ENCODE measurements at regions of chr14 and their contacts with region 1.

Region 1: DNA sequence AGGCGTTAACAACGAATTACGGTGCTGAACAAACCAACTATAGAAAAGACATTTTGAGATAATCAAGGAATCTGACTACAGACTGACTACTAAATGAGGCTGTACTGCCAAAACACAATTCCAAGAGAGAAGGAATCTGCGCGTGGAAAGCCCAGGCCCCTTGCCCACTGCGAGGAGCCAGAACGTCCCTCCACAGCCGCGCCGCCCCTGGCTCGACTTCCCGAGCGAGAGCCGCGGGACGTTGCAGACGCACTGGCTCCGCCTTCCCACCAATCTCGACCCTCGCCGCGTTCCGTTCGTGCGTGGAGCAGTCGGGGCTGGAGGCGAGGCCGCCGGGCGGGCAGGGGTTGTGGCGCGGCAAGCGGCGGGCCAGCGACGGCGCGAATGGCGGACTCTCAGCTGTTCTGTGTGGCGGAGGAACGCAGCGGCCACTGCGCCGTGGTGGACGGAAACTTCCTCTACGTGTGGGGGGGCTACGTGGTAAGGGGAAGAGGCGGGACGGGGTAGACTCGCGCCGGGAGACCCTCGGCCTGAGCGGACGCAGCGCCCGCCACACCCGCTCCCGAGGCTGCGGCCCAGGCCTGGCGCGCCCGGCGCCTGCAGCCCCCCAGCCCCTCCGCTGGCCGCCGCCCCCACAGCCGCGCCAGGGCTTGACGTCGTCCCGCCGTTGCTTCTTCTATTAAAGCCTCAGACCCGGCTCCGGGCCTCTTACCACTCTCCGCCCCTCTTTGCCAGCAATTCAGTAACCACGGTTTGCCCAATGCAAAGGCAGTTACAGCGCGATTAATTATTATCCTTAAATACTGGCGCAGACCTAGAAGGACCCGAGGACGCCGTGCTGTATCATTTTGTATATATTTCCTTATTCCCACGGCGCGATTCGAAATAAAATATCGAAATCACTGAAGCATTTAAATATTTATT is at the start of gene KLHDC1:
- DNase-seq: peak; percentile 83
- H3K4me3 ChIP-seq: peak within 1 kb of the TSS; percentile 53
- H3K27ac ChIP-seq: peak within 1 kb of the TSS; percentile 85
- H3K4me1 ChIP-seq: no peaks in the 10 kb centered on the region
- H3K27me3 ChIP-seq: no peaks in the 10 kb centered on the region
- CTCF ChIP-seq: no peak
- total RNA-seq, gene KLHDC1: 0.94 to 2.5 TPM

Region 2: GRCh38 chr14:49767562-49768300 is 74.7 kb after region 1 on chr14 and contains the start of gene KLHDC2:
- intact Hi-C with region 1: loop called (anchors 5 kb)
- DNase-seq: peak; percentile 87
- H3K4me3 ChIP-seq: peak within 1 kb of the TSS; percentile 88
- H3K27ac ChIP-seq: peak within 1 kb of the TSS; percentile 97
- H3K4me1 ChIP-seq: peaks cover 10% of the 10 kb centered on the region
- H3K27me3 ChIP-seq: no peaks in the 10 kb centered on the region
- CTCF ChIP-seq: no peak
- total RNA-seq, gene KLHDC2: 37.5 to 68.7 TPM

Measured in colonic mucosa (tissue), 4 donors.